A549 (cell line): ENCODE measurements at regions of chr19 and their contacts with region 1.

Region 1: GRCh38 chr19:39328046-39328705 is 7.5 kb upstream of the LRFN1 start:
- DNase-seq: peak; percentile 83 to 97
- ATAC-seq: peak; percentile 74 to 83
- H3K4me3 ChIP-seq: no peak overlapping the region
- H3K27ac ChIP-seq: peak overlapping the region in 1 of 2 experiments; percentile 19; a peak in 2 of 6 replicates
- H3K4me1 ChIP-seq: peaks cover 10% of the 10 kb centered on the region; the same call in 1 of the 3 replicates
- CTCF ChIP-seq: peak; percentile 100
- EP300 ChIP-seq: no peak
- POLR2A ChIP-seq: no peak
- RAD21 ChIP-seq: peak; percentile 100

Region 2: DNA sequence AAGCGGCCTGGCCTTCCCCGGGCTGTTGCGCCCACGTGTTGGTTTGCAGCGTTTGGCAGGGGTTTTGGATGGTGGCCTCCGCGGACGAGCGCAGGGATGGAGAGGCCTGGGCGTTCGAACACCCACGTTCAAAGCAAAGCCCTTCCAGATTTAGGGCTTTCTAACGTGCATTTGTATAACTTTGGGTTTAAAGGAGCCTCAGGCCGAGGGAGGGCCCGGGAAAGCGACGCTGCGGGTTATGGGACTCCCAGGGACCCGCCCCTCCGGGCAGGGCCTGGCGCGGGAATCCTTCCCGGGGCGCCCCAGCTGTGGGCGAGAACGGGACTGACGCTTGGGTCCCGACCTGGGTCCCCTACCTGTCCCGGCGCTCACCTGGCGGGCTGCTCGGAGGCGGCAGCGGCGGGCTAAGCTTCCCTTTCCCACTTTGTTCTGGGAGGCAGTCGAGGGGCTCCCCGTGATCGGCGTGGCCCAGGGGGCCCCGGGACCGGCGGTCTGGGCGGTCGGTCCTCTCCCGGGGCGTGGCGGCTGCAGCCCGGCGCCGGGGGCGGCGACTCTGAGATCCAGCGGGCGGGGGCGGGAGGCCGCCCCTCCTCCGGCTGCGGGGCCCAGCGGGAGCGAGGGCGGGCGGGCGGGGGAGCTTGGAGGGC is 352.8 kb before region 1 on chr19 and contains the start of gene FBXO17:
- CTCF ChIA-PET with region 1: interaction called, 14 read pairs
- POLR2A ChIA-PET with region 1: no interaction called
- DNase-seq: peak; percentile 84 to 87
- ATAC-seq: peak; percentile 83
- H3K4me3 ChIP-seq: peak within 1 kb of the TSS; percentile 51
- H3K27ac ChIP-seq: peak within 1 kb of the TSS; percentile 91 to 94
- H3K4me1 ChIP-seq: peaks cover 51% of the 10 kb centered on the region
- CTCF ChIP-seq: no peak; the same call in 2 of the 3 replicates
- EP300 ChIP-seq: 0 out of 5 replicates have a peak, but pooled peaks of 1 of the 2 experiments have one; percentile 6
- POLR2A ChIP-seq: peak; percentile 41
- RAD21 ChIP-seq: 0 out of 5 replicates have a peak, but pooled peaks have one; percentile 11 to 16
- polyA plus RNA-seq, gene FBXO17: 68.1 and 73.1 TPM in 2 replicates

Region 3: GRCh38 chr19:39119554-39120229 is 208.5 kb before region 1 on chr19:
- CTCF ChIA-PET with region 1: interaction called, 133 read pairs
- POLR2A ChIA-PET with region 1: interaction called, 5 read pairs
- DNase-seq: no peak
- ATAC-seq: no peak
- H3K4me3 ChIP-seq: no peak overlapping the region
- H3K27ac ChIP-seq: peak overlapping the region in 1 of 2 experiments; percentile 53; a peak in 4 of 6 replicates
- H3K4me1 ChIP-seq: peaks cover 19% of the 10 kb centered on the region
- CTCF ChIP-seq: no peak
- EP300 ChIP-seq: no peak
- POLR2A ChIP-seq: no peak
- RAD21 ChIP-seq: no peak

Region 4: DNA sequence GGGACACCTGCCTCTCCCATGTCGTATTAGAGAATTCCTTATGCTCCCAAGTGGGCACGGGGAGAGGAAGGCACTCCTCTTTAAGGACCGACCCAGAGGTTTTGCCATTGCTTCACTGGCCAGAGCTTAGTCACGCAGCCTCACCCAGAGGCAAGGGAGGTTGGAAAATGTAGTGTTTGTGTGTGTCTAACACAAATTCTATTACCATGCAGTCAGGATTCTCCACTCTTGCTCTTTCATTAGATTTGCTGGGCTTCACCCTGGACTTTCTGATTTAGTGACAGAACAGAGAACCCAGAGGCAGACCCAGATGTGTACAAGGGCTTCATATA is 146.0 kb before region 1 on chr19:
- CTCF ChIA-PET with region 1: interaction called, 18 read pairs
- POLR2A ChIA-PET with region 1: no interaction called
- DNase-seq: no peak
- ATAC-seq: peak; percentile 6 to 20; a peak in 4 of 6 replicates
- H3K4me3 ChIP-seq: no peak overlapping the region
- H3K27ac ChIP-seq: peak overlapping the region in 1 of 2 experiments; percentile 9; a peak in 2 of 6 replicates
- H3K4me1 ChIP-seq: no peaks in the 10 kb centered on the region
- CTCF ChIP-seq: no peak
- EP300 ChIP-seq: no peak
- POLR2A ChIP-seq: no peak
- RAD21 ChIP-seq: no peak

Region 5: GRCh38 chr19:39297654-39298634 is 30.2 kb before region 1 on chr19:
- CTCF ChIA-PET with region 1: interaction called, 11 read pairs
- POLR2A ChIA-PET with region 1: no interaction called
- DNase-seq: no peak
- ATAC-seq: peak; percentile 40 to 48; a peak in 4 of 6 replicates
- H3K4me3 ChIP-seq: no peak overlapping the region
- H3K27ac ChIP-seq: no peak overlapping the region
- H3K4me1 ChIP-seq: no peaks in the 10 kb centered on the region
- CTCF ChIP-seq: no peak
- EP300 ChIP-seq: no peak
- POLR2A ChIP-seq: no peak
- RAD21 ChIP-seq: no peak

Region 6: DNA sequence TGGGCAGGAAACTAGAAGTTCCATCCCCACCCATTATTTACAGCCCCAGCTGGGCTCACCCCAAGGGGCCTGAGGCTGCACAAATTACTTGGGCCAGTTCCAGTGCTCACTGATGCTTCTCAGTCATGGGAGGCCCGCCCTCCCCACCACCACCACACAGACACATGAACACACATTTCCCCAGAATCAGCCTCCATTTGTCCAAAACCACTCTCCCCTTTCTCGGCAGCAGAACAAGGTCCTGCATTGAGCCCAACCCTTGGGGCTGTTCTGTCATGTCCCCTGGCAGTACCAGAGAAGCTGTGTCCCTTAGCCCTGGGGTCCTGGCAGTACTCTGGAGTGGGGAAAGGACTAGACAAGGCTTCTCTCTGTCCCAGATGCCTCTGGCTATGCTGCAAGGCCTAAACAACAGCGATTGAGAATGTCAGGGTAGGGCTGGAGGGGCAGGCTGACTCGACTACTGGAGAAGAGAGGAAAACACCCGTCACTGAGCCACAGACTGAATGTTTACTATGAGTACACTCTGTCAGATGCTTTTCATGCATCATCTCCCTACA is 35.8 kb after region 1 on chr19:
- CTCF ChIA-PET with region 1: interaction called, 11 read pairs
- POLR2A ChIA-PET with region 1: no interaction called
- DNase-seq: no peak
- ATAC-seq: no peak; a peak in 2 of 6 replicates
- H3K4me3 ChIP-seq: no peak overlapping the region
- H3K27ac ChIP-seq: no peak overlapping the region
- H3K4me1 ChIP-seq: no peaks in the 10 kb centered on the region
- CTCF ChIP-seq: no peak
- EP300 ChIP-seq: no peak
- POLR2A ChIP-seq: no peak
- RAD21 ChIP-seq: no peak

Region 7: DNA sequence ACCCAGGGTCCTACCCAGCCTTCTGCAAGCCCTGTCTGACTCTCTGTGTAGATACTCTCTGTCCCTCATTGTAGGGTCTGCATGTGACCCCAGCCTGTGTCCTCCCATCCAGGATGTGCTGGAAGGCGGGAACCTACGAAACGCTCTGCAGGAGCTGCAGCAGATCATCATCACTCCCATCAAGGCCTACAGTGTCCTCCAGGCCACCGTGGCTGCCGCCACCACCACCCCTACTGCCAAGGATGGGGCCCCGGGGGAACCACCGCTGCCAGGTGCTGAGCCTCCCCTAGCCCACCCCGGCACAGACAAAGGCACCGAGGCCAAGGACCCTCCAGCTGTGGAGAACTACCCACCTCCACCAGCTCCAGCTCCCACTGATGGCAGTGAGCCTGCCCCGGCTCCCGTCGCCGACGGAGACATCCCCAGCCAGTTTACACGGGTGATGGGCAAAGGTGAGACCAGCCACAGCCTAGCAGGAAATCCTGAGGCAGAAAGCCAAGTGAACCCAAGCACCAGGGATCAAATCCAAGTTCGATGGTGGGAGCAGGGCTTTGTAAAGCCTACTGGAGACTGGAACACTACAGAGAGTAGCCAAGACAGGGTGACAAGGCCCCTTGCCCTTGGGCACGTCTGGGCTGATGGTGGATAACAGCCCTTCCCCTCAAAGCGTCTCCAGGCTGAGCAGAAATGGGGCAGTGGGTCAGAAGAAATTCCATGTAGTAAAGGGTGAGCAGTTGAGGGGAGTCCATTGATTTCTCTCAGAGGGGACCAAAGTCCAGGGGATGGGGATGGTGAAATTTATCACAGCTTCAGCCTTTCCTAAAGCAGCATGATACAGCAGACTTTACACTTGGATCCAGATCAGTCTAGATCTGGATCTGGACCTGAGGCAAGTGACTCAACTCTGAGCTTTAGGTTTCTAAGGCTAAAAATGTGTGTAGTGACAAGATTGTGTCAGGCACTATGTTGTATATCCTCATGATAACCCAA is 49.5 kb after region 1 on chr19:
- CTCF ChIA-PET with region 1: no interaction called
- POLR2A ChIA-PET with region 1: no interaction called
- DNase-seq: no peak
- ATAC-seq: no peak
- H3K4me3 ChIP-seq: no peak overlapping the region
- H3K27ac ChIP-seq: no peak overlapping the region
- H3K4me1 ChIP-seq: no peaks in the 10 kb centered on the region
- CTCF ChIP-seq: no peak
- EP300 ChIP-seq: no peak
- POLR2A ChIP-seq: no peak
- RAD21 ChIP-seq: no peak